Activated CD4-positive, alpha-beta T cell treated with anti-CD3 and anti-CD28 coated beads, Interleukin-2, amount 10 ng/mL, durations not matched to agents 7 days and 5 days (primary cell): ENCODE measurements at regions of chr12 and their contacts with region 1.

Region 1: GRCh38 chr12:121230538-121230907 is 20.6 kb downstream of the P2RX4 start:
- DNase-seq: no peak
- H3K4me3 Mint-ChIP-seq: no peak overlapping the region
- H3K27ac Mint-ChIP-seq: peak overlapping the region; percentile 7
- H3K4me1 Mint-ChIP-seq: peaks cover 35% of the 10 kb centered on the region
- H3K27me3 Mint-ChIP-seq: no peaks in the 10 kb centered on the region

Region 2: GRCh38 chr12:120327593-120327992 is 902.9 kb before region 1 on chr12 and contains the start of gene PLA2G1B:
- CTCF ChIA-PET with region 1: no interaction called
- POLR2A ChIA-PET with region 1: no interaction called
- DNase-seq: no peak
- H3K4me3 Mint-ChIP-seq: no peak within 1 kb of the TSS
- H3K27ac Mint-ChIP-seq: no peak within 1 kb of the TSS
- H3K4me1 Mint-ChIP-seq: peaks cover 8% of the 10 kb centered on the region
- H3K27me3 Mint-ChIP-seq: no peaks in the 10 kb centered on the region
- total RNA-seq, gene PLA2G1B: not detected

Region 3: GRCh38 chr12:120903411-120904196 is 326.9 kb before region 1 on chr12:
- CTCF ChIA-PET with region 1: no interaction called
- POLR2A ChIA-PET with region 1: no interaction called
- DNase-seq: peak; percentile 72
- H3K4me3 Mint-ChIP-seq: peak overlapping the region; percentile 99
- H3K27ac Mint-ChIP-seq: peak overlapping the region; percentile 94
- H3K4me1 Mint-ChIP-seq: peaks cover 39% of the 10 kb centered on the region
- H3K27me3 Mint-ChIP-seq: no peaks in the 10 kb centered on the region

Region 4: GRCh38 chr12:121240484-121241101 is 10.1 kb after region 1 on chr12:
- CTCF ChIA-PET with region 1: interaction called, 13 read pairs
- POLR2A ChIA-PET with region 1: no interaction called
- DNase-seq: peak; percentile 88
- H3K4me3 Mint-ChIP-seq: peak overlapping the region; percentile 64
- H3K27ac Mint-ChIP-seq: peak overlapping the region; percentile 98
- H3K4me1 Mint-ChIP-seq: peaks cover 48% of the 10 kb centered on the region
- H3K27me3 Mint-ChIP-seq: no peaks in the 10 kb centered on the region